ENCODE measurements at regions of chr14 and their contacts with region 1.

Region 1: DNA sequence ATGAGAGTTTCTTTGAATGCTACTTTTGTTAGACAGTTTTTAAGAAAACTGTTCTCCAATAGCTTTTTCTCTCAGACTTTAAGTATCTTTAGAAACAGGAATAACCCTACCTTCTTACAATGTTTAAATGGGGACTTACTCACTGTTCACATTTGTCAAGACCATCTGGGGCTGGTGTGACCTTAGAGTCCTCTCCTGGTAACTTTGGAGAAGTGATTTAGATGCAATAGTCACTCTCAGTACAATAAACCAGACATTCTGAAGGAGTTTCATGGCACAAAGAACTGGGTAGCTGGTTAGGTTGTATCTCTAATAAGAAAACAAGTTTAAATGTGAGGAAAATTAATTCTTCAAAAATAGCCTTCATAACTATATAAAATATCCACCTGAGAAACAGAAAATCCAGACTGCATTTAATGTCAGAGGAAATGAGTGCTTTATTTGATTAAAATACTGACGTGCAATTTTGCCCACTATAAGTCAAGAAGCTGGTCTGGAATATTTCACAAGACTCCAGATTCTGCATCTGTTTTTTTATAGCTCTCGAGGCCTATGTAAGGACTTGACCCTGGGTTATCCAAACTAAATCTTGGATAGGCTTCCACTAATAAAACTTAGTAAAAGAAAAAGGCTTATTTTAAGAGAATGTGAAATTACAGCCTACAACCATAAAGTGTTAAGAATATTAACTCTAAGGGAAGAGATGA is 108.7 kb downstream of the PTGER2 start:
- DNase-seq: no peak
- ATAC-seq: peak; percentile 46
- H3K4me3 ChIP-seq: no peak overlapping the region
- H3K27ac ChIP-seq: no peak overlapping the region
- H3K4me1 ChIP-seq: no peaks in the 10 kb centered on the region
- H3K27me3 ChIP-seq: no peaks in the 10 kb centered on the region
- CTCF ChIP-seq: no peak

Region 2: DNA sequence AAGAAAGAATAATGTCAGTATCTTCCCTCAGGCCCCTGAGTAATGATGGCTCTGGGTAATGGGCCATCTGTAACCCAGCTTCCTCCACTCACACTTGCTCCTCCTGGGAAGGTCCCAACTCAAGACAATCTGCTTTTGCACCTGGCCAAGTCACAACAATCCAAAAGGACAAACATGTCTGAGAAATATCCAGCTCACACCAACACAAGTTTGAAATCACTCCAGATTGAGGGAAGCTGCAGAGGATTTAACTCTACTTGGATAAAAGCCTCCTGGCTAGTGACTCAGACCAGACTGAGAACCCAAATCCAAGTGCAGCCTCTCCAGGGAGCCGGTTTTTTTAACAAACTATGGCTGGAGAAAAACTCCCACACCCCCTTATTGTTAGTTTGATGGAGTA is 399.3 kb before region 1 on chr14:
- CTCF ChIA-PET with region 1: no interaction called
- POLR2A ChIA-PET with region 1: interaction called, 11 read pairs
- intact Hi-C with region 1: no loop called
- DNase-seq: peak; percentile 72
- ATAC-seq: peak; percentile 47
- H3K4me3 ChIP-seq: no peak overlapping the region
- H3K27ac ChIP-seq: no peak overlapping the region; the same call in 1 of the 2 replicates
- H3K4me1 ChIP-seq: peaks cover 27% of the 10 kb centered on the region
- H3K27me3 ChIP-seq: no peaks in the 10 kb centered on the region
- CTCF ChIP-seq: no peak

Region 3: GRCh38 chr14:52272375-52272774 is 150.4 kb before region 1 on chr14:
- CTCF ChIA-PET with region 1: no interaction called
- POLR2A ChIA-PET with region 1: interaction called, 35 read pairs
- intact Hi-C with region 1: no loop called
- DNase-seq: peak; percentile 80
- ATAC-seq: peak; percentile 85
- H3K4me3 ChIP-seq: no peak overlapping the region
- H3K27ac ChIP-seq: no peak overlapping the region
- H3K4me1 ChIP-seq: no peaks in the 10 kb centered on the region; the same call in 1 of the 2 replicates
- H3K27me3 ChIP-seq: peaks cover 23% of the 10 kb centered on the region
- CTCF ChIP-seq: peak; percentile 75

Region 4: DNA sequence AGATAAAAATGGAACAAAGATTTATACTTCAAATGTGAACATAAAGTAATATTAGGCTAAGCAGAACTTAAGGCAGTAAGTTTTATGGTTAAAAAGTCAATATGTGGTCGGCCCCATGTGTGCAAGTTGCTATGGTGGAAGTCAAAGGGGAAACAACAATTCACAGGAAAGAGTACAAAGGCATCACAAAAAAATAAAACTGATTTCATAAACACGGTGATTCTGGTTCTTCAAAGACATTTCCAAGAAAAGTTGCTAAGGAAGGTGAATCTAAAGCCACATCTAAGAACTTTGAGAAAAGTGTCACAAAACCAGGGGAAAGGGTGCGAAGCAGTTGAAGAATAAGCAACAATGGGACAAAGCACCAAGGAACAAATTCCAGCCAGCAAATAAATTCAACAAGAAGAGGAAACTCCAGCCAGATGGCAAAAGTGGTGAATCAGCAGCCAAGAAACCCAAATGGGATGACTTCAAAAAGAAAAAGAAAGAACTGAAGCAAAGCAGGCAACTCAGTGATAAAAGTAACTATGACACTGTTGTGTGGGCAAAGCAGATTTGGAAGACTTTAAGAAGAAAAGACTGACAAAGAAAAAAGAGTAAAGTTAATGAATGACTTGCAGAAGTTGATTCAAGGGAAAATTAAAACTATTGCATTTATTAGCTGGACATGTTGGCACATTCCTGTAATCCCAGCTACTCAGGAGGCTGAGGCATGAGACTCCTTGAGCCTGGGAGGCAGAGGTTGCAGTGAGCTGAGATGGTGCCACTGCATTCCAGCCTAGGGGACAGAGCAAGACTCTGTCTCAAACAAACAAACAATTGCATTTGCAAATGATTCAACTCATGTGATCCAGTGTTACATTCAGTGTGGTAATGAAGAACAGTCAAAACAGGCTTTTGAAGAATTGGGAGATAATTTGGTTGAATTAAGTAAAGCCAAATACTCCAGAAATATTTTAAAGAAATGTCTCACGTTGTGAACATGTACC is 135.8 kb before region 1 on chr14:
- CTCF ChIA-PET with region 1: no interaction called
- POLR2A ChIA-PET with region 1: no interaction called
- intact Hi-C with region 1: no loop called
- DNase-seq: no peak
- ATAC-seq: no peak
- H3K4me3 ChIP-seq: no peak overlapping the region
- H3K27ac ChIP-seq: no peak overlapping the region
- H3K4me1 ChIP-seq: no peaks in the 10 kb centered on the region
- H3K27me3 ChIP-seq: no peaks in the 10 kb centered on the region
- CTCF ChIP-seq: no peak

Region 5: GRCh38 chr14:52575858-52576257 is 153.1 kb after region 1 on chr14:
- CTCF ChIA-PET with region 1: no interaction called
- POLR2A ChIA-PET with region 1: interaction called, 15 read pairs
- intact Hi-C with region 1: no loop called
- DNase-seq: no peak
- ATAC-seq: no peak
- H3K4me3 ChIP-seq: no peak overlapping the region
- H3K27ac ChIP-seq: no peak overlapping the region
- H3K4me1 ChIP-seq: no peaks in the 10 kb centered on the region
- H3K27me3 ChIP-seq: no peaks in the 10 kb centered on the region
- CTCF ChIP-seq: no peak

Measured in PC-3 (cell line).